B cell (primary cell): ENCODE measurements at regions of chr9 and their contacts with region 1.

Region 1: GRCh38 chr9:94681508-94681907 is 42.2 kb upstream of the FBP1 start:
- DNase-seq: peak; percentile 77
- ATAC-seq: peak; percentile 83
- H3K4me3 ChIP-seq: no peak overlapping the region
- H3K4me3 Mint-ChIP-seq: no peak overlapping the region
- H3K27ac ChIP-seq: no peak overlapping the region
- H3K27ac Mint-ChIP-seq: peak overlapping the region; percentile 22
- H3K4me1 ChIP-seq: no peaks in the 10 kb centered on the region
- H3K4me1 Mint-ChIP-seq: no peaks in the 10 kb centered on the region
- H3K27me3 ChIP-seq: peaks cover 0 to 6% (median 2%) of the 10 kb centered on the region in 4 experiments
- H3K27me3 Mint-ChIP-seq: peaks cover 17% of the 10 kb centered on the region
- CTCF ChIP-seq: peak; percentile 79

Region 2: DNA sequence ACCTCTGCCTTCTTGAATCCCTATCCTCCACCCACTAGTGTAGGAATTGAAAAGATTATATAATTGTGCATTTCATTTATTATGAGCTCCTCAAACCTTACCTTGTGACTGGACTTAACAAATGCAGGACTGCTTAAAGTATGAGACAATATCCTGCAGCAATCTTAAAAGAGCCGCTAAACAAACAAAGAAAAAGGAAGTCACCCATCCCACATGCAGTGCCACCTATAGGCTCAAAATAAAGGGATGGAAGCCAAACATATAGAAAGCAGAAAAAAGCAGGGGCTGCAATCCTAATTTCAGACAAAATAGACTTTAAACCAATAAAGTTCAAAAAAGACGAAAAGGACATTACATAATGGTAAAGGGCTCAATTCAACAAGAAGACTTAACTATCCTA is 118.0 kb before region 1 on chr9:
- CTCF ChIA-PET with region 1: no interaction called
- POLR2A ChIA-PET with region 1: no interaction called
- intact Hi-C with region 1: no loop called
- DNase-seq: no peak
- ATAC-seq: no peak
- H3K4me3 ChIP-seq: no peak overlapping the region
- H3K4me3 Mint-ChIP-seq: no peak overlapping the region
- H3K27ac ChIP-seq: no peak overlapping the region
- H3K27ac Mint-ChIP-seq: no peak overlapping the region
- H3K4me1 ChIP-seq: no peaks in the 10 kb centered on the region
- H3K4me1 Mint-ChIP-seq: no peaks in the 10 kb centered on the region
- H3K27me3 ChIP-seq: peaks cover 0 to 2% (median under 1%) of the 10 kb centered on the region in 4 experiments
- H3K27me3 Mint-ChIP-seq: peaks cover 22% of the 10 kb centered on the region
- CTCF ChIP-seq: no peak

Region 3: GRCh38 chr9:94603259-94604160 is 78.0 kb before region 1 on chr9:
- CTCF ChIA-PET with region 1: no interaction called
- POLR2A ChIA-PET with region 1: no interaction called
- intact Hi-C with region 1: no loop called
- DNase-seq: peak; percentile 67
- ATAC-seq: peak; percentile 72
- H3K4me3 ChIP-seq: no peak overlapping the region
- H3K4me3 Mint-ChIP-seq: no peak overlapping the region
- H3K27ac ChIP-seq: no peak overlapping the region
- H3K27ac Mint-ChIP-seq: no peak overlapping the region
- H3K4me1 ChIP-seq: peaks cover 0 to 4% of the 10 kb centered on the region in 2 donors
- H3K4me1 Mint-ChIP-seq: peaks cover 5% of the 10 kb centered on the region
- H3K27me3 ChIP-seq: no peaks in the 10 kb centered on the region
- H3K27me3 Mint-ChIP-seq: peaks cover 33% of the 10 kb centered on the region
- CTCF ChIP-seq: peak; percentile 72

Region 4: GRCh38 chr9:94649100-94649819 is 32.2 kb before region 1 on chr9:
- CTCF ChIA-PET with region 1: no interaction called
- POLR2A ChIA-PET with region 1: no interaction called
- intact Hi-C with region 1: no loop called
- DNase-seq: no peak
- ATAC-seq: no peak
- H3K4me3 ChIP-seq: no peak overlapping the region
- H3K4me3 Mint-ChIP-seq: no peak overlapping the region
- H3K27ac ChIP-seq: no peak overlapping the region
- H3K27ac Mint-ChIP-seq: no peak overlapping the region
- H3K4me1 ChIP-seq: no peaks in the 10 kb centered on the region
- H3K4me1 Mint-ChIP-seq: no peaks in the 10 kb centered on the region
- H3K27me3 ChIP-seq: no peaks in the 10 kb centered on the region
- H3K27me3 Mint-ChIP-seq: peaks cover 10% of the 10 kb centered on the region
- CTCF ChIP-seq: no peak

Region 5: GRCh38 chr9:94783102-94783664 is 101.7 kb after region 1 on chr9:
- CTCF ChIA-PET with region 1: interaction called, 13 read pairs
- POLR2A ChIA-PET with region 1: no interaction called
- intact Hi-C with region 1: loop called (anchors 1 kb)
- DNase-seq: peak; percentile 53
- ATAC-seq: peak; percentile 47
- H3K4me3 ChIP-seq: no peak overlapping the region
- H3K4me3 Mint-ChIP-seq: no peak overlapping the region
- H3K27ac ChIP-seq: no peak overlapping the region
- H3K27ac Mint-ChIP-seq: no peak overlapping the region
- H3K4me1 ChIP-seq: no peaks in the 10 kb centered on the region
- H3K4me1 Mint-ChIP-seq: peaks cover 7% of the 10 kb centered on the region
- H3K27me3 ChIP-seq: no peaks in the 10 kb centered on the region
- H3K27me3 Mint-ChIP-seq: no peaks in the 10 kb centered on the region
- CTCF ChIP-seq: peak; percentile 59

Region 6: DNA sequence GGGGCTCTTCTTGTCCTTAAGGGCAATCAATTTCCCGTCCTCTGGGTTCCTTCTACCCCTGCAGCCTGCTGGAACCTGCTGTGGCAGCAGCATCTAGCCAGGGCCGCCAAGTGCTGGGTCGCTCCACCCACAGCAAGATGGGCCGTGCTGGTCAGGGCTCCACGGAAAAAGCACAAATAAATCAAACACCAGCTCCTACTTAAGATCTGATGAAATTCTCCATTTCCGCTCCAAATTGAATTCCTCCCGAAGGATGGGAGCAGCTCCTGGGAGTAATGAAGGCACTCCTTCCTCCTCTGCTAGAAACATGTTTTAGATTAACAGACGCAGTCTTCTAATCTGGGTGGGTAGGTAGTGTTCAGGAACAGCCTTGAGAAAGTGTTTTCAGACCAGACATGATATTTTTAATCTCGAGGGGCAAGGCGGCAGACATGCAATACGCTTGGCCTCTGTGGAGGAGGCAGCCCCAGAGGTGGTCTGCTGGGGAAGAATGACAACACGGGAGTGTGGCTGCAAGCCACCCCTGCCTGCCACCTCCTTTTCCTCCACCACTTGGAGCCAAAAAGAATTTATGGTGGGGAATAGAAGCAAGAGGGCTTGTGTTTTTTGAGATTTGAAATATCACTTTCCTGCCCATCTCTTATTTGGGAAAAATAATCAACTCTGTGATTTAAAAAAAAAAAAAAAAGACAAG is 239.0 kb after region 1 on chr9:
- CTCF ChIA-PET with region 1: interaction called, 93 read pairs
- POLR2A ChIA-PET with region 1: no interaction called
- intact Hi-C with region 1: no loop called
- DNase-seq: no peak
- ATAC-seq: no peak
- H3K4me3 ChIP-seq: no peak overlapping the region
- H3K4me3 Mint-ChIP-seq: no peak overlapping the region
- H3K27ac ChIP-seq: no peak overlapping the region
- H3K27ac Mint-ChIP-seq: no peak overlapping the region
- H3K4me1 ChIP-seq: no peaks in the 10 kb centered on the region
- H3K4me1 Mint-ChIP-seq: peaks cover 8% of the 10 kb centered on the region
- H3K27me3 ChIP-seq: no peaks in the 10 kb centered on the region
- H3K27me3 Mint-ChIP-seq: no peaks in the 10 kb centered on the region
- CTCF ChIP-seq: no peak

Region 7: DNA sequence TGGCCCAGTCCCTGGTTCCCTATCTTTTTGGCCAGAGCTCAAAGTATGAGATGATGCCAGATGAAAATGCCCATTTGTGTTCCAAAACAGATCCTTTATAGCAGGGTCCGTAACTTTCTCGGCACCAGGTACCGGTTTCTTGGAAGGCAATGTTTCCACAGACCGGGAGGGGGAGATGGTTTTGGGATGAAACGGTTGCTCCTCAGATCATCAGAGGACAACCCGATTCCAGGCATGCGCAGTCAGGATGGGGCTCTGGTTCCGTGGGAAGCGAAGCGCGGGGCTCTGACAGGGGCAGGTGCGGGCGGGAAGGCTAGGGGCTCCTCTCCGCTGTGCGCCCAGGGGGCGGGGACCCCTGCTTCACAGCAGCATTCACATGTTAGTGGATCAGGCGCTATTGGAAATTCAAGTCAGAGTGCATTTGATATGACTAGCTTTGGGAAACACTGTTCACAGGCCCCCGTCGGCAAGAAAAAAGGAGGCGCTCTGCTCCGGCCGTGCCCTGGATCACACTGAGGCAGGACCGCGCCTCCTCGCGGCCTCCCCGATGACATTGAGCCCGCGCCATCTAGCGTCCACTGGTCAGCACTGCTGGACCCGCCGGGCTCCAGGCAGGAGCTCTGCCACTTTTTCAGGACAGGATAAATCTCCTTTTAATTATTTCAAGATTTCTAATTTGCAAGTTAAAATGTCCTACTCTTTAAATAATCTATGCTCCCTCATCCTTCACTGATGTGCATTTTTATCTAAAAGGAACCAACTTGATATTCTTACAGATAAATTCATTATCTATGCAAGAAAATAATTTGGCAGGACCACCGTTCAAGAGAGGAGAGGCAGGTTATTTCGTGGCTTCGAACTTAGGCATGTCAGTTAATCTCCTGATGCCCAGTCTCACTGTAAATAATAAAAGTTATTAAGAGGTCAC is 446.0 kb after region 1 on chr9:
- CTCF ChIA-PET with region 1: interaction called, 314 read pairs
- POLR2A ChIA-PET with region 1: no interaction called
- intact Hi-C with region 1: loop called (anchors 1 kb)
- DNase-seq: peak; percentile 66
- ATAC-seq: peak; percentile 89
- H3K4me3 ChIP-seq: no peak overlapping the region
- H3K4me3 Mint-ChIP-seq: no peak overlapping the region
- H3K27ac ChIP-seq: no peak overlapping the region
- H3K27ac Mint-ChIP-seq: no peak overlapping the region
- H3K4me1 ChIP-seq: peaks cover 0 to 5% of the 10 kb centered on the region in 2 donors
- H3K4me1 Mint-ChIP-seq: peaks cover 2% of the 10 kb centered on the region
- H3K27me3 ChIP-seq: no peaks in the 10 kb centered on the region
- H3K27me3 Mint-ChIP-seq: no peaks in the 10 kb centered on the region
- CTCF ChIP-seq: peak; percentile 86

Region 8: DNA sequence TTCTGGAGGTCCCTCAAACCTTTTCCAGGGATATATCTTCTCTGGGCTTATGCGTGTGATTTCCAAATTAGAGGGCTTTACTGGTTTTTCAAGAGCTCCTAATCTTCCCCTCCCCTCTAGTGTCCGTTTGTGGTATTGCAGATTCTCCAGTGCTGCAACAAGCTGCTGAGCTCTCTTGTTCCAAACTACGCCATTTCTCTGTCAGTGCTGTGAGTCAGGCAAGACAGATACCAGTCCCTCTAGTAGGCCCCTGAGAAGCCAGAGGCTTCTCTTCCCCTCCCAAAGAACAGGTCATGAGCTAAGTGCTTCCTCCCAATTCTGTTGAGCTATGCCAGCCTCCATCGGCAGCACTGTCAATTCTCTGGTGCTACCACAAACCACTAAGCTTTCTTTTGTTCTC is 486.5 kb after region 1 on chr9:
- CTCF ChIA-PET with region 1: interaction called, 30 read pairs
- POLR2A ChIA-PET with region 1: no interaction called
- intact Hi-C with region 1: loop called (anchors 1 kb)
- DNase-seq: peak; percentile 52
- ATAC-seq: peak; percentile 33
- H3K4me3 ChIP-seq: no peak overlapping the region
- H3K4me3 Mint-ChIP-seq: no peak overlapping the region
- H3K27ac ChIP-seq: no peak overlapping the region
- H3K27ac Mint-ChIP-seq: no peak overlapping the region
- H3K4me1 ChIP-seq: no peaks in the 10 kb centered on the region
- H3K4me1 Mint-ChIP-seq: no peaks in the 10 kb centered on the region
- H3K27me3 ChIP-seq: no peaks in the 10 kb centered on the region
- H3K27me3 Mint-ChIP-seq: no peaks in the 10 kb centered on the region
- CTCF ChIP-seq: peak; percentile 79

Region 9: GRCh38 chr9:96217754-96218693 is 1536.5 kb after region 1 on chr9:
- CTCF ChIA-PET with region 1: interaction called, 18 read pairs
- POLR2A ChIA-PET with region 1: no interaction called
- intact Hi-C with region 1: no loop called
- DNase-seq: peak; percentile 71
- ATAC-seq: peak; percentile 77
- H3K4me3 ChIP-seq: peak overlapping the region in 2 of 5 experiments; percentile 6
- H3K4me3 Mint-ChIP-seq: peak overlapping the region; percentile 55
- H3K27ac ChIP-seq: no peak overlapping the region
- H3K27ac Mint-ChIP-seq: no peak overlapping the region
- H3K4me1 ChIP-seq: peaks cover 10 to 14% of the 10 kb centered on the region in 2 donors
- H3K4me1 Mint-ChIP-seq: peaks cover 7% of the 10 kb centered on the region
- H3K27me3 ChIP-seq: peaks cover 0 to 38% (median 14%) of the 10 kb centered on the region in 4 experiments
- H3K27me3 Mint-ChIP-seq: peaks cover 57% of the 10 kb centered on the region
- CTCF ChIP-seq: peak; percentile 88